ENCODE measurements at regions of chr20 and their contacts with region 1.

Region 1: DNA sequence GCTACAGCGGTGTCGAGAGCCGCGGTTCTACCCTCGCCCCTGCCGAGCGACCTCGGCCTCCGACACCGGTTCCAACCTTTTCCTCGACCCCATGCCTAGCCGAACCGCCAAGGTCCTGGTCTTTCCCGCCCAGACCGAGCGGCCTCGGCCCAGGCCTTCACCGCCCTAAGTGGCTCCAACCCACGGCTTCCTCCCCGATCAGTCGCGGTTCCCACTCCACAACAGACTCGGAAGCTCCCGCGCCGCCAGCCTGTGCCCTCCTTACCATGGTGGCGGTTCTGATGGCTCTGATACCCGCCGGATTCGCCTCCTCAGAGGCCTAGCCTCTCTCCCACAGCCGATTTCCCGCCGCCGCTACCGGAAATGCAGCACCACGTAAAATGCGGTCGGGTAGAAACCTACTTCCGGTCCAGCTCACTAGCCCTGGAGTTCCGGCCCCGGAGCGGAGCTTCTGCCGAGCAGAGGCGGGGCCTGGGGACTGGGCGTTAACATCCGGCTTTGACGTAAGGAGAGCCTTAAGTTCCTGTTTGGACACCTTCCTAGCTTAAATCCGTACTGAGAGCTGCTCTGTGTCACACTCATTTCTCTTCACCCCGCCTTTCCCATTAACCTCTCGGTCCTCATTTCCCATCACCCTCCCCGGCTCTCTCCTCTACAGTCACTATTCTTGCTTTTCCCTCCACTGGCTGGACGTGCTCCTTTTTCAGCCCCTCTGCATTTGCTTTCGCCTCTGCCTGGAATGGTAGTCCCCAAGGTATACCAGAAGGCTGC is at the start of gene SNRPB:
- DNase-seq: peak; percentile 95
- ATAC-seq: peak; percentile 95
- H3K4me3 Mint-ChIP-seq: peak within 1 kb of the TSS; percentile 96
- H3K27ac Mint-ChIP-seq: peak within 1 kb of the TSS; percentile 98
- H3K4me1 Mint-ChIP-seq: peaks cover 40% of the 10 kb centered on the region
- H3K27me3 Mint-ChIP-seq: no peaks in the 10 kb centered on the region
- total RNA-seq, gene SNRPB: 232 to 235 TPM

Region 2: GRCh38 chr20:2101865-2102584 is 368.6 kb before region 1 on chr20:
- POLR2A ChIA-PET with region 1: interaction called, 11 read pairs
- DNase-seq: peak; percentile 88
- ATAC-seq: peak; percentile 81
- H3K4me3 Mint-ChIP-seq: peak overlapping the region; percentile 93
- H3K27ac Mint-ChIP-seq: peak overlapping the region; percentile 100
- H3K4me1 Mint-ChIP-seq: peaks cover 33% of the 10 kb centered on the region
- H3K27me3 Mint-ChIP-seq: no peaks in the 10 kb centered on the region

Region 3: GRCh38 chr20:2455771-2456497 is 14.7 kb before region 1 on chr20:
- POLR2A ChIA-PET with region 1: interaction called, 32 read pairs
- DNase-seq: no peak
- ATAC-seq: no peak
- H3K4me3 Mint-ChIP-seq: no peak overlapping the region
- H3K27ac Mint-ChIP-seq: peak overlapping the region; percentile 13
- H3K4me1 Mint-ChIP-seq: no peaks in the 10 kb centered on the region
- H3K27me3 Mint-ChIP-seq: no peaks in the 10 kb centered on the region

Region 4: DNA sequence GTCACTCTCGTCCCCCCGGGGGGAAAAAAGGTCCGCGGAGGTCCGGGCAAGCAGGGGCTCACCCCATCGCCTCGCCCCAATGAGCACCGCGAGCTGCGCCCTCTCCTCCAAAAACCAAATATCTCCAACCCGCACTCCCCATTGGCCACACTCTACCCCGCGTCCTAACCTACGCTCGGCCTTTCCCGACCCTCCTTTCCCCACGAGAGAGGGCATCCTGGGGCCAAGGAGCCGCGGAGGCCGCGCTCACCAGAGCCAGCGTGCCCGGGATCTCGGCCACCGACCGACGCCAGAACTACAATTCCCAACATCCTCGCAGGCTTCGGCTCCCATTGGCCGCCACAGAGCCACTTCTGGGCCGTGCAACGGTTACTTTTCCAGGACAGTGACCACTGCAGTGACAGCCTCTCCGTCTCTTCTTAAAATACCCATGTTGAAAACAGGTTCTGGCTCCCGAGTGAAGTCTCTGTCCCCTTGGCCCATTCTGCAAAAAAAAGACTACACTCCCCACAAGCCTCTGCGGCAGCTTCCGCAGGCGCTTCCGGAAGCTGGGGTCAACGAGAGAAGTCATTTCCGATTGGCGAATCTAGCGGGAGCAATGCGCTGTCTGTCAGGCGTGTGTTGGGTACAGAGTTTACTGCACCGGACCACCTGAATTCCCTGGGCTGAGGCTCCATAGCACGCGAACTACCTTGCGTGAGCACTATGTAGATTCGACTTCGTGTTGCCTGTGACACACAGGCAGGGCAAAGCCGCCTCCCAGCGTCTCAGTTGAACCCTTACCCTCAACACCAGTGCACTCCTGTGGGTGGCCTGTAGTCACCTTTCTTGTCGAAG is 38.2 kb after region 1 on chr20 and contains the start of gene ZNF343:
- POLR2A ChIA-PET with region 1: interaction called, 27 read pairs
- DNase-seq: peak; percentile 77
- ATAC-seq: peak; percentile 92
- H3K4me3 Mint-ChIP-seq: peak within 1 kb of the TSS; percentile 99
- H3K27ac Mint-ChIP-seq: peak within 1 kb of the TSS; percentile 99
- H3K4me1 Mint-ChIP-seq: peaks cover 10% of the 10 kb centered on the region
- H3K27me3 Mint-ChIP-seq: peaks cover 27% of the 10 kb centered on the region
- total RNA-seq, gene ZNF343: 10.4 to 12.0 TPM

Region 5: DNA sequence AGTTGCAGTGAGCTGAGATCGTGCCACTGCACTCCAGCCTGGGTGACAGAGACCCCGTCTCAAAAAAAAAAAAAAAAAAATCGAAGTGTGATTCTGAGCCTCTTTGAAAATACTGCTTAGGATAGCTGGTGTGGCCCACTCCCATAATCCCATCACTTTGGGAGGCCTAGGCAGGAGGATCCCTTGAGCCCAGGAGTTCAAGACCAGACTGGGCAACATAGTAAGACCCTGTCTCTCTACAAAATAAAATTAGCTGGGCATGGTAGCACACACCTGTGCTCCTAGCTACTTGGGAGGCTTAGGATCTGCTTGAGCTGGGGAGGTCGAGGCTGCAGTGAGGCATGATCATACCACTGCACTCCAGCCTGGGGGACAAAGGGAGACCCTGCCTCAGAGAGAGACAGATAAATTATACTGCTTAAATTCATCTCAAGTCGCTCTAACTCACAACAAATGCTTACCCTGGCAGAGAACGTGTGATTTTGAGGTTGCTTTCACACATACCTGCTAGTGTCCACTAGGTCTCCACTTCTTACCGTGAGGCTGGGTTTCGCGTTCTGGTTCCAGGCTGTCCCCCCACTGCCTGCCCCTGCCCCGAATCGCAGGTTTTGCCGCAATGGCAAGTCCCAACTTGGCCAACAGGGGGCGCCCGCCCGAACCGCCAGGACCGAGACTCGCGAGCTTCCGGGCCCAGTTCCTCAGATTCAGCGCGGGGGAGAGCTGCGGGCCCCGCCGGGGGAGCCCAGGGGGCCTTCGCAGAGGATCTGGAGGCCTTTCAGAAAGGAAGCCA is 53.5 kb after region 1 on chr20:
- POLR2A ChIA-PET with region 1: interaction called, 30 read pairs
- DNase-seq: peak; percentile 96
- ATAC-seq: peak; percentile 77
- H3K4me3 Mint-ChIP-seq: peak overlapping the region; percentile 82
- H3K27ac Mint-ChIP-seq: peak overlapping the region; percentile 89
- H3K4me1 Mint-ChIP-seq: peaks cover 18% of the 10 kb centered on the region
- H3K27me3 Mint-ChIP-seq: peaks cover 10% of the 10 kb centered on the region

Region 6: GRCh38 chr20:2558581-2559278 is 88.1 kb after region 1 on chr20:
- POLR2A ChIA-PET with region 1: no interaction called
- DNase-seq: no peak
- ATAC-seq: no peak
- H3K4me3 Mint-ChIP-seq: no peak overlapping the region
- H3K27ac Mint-ChIP-seq: no peak overlapping the region
- H3K4me1 Mint-ChIP-seq: peaks cover 2% of the 10 kb centered on the region
- H3K27me3 Mint-ChIP-seq: peaks cover 70% of the 10 kb centered on the region

Region 7: DNA sequence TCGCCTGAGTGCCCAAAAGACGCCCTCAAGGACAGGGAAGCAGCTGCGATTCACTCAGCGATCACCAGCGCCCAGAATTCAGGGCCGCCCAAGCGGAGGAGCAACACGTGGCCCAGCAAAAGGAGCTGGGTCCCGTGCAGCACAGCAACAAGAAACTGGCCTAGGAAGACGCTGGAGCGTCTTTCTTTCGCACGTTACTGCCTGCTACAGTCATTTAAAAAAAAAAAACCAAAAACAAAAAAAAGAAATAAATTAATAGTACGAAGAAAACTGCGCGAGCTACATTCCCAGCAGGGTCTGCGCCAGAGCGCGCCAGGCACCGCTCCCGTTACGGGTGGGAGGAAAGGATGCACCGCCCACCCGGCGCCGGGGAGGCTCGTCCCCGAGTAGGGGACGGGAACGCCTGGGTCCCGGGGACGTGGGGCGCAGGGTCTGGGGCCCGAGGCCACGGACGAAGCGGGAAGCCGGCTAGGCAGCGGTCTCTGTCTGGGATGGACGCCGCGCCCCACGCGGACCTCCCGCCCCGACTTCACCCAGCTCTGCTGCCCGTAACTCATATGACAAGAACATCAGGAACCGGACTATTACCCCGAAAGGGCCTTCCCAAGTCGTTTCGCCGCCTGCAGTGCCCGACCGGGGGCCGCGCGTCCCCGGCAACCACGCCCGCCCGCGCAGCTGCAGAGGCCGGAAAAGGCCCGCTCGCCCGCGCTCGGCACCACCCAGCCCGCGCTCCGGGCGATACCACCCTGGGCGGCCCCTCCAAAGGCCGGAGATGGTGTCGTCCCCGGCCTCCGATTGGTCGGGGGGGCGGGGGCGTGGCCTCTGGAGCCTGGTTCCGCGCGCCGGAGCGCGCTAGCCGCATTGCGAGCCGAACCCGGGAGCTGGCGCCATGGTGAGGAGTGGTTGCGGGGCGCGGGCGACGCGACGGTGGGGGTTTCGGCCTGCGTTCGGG is 181.4 kb after region 1 on chr20 and contains the start of gene NOP56:
- POLR2A ChIA-PET with region 1: interaction called, 31 read pairs
- DNase-seq: peak; percentile 99
- ATAC-seq: peak; percentile 89
- H3K4me3 Mint-ChIP-seq: peak within 1 kb of the TSS; percentile 89
- H3K27ac Mint-ChIP-seq: peak within 1 kb of the TSS; percentile 87
- H3K4me1 Mint-ChIP-seq: peaks cover 33% of the 10 kb centered on the region
- H3K27me3 Mint-ChIP-seq: no peaks in the 10 kb centered on the region
- total RNA-seq, gene NOP56: 322 to 330 TPM

Region 8: DNA sequence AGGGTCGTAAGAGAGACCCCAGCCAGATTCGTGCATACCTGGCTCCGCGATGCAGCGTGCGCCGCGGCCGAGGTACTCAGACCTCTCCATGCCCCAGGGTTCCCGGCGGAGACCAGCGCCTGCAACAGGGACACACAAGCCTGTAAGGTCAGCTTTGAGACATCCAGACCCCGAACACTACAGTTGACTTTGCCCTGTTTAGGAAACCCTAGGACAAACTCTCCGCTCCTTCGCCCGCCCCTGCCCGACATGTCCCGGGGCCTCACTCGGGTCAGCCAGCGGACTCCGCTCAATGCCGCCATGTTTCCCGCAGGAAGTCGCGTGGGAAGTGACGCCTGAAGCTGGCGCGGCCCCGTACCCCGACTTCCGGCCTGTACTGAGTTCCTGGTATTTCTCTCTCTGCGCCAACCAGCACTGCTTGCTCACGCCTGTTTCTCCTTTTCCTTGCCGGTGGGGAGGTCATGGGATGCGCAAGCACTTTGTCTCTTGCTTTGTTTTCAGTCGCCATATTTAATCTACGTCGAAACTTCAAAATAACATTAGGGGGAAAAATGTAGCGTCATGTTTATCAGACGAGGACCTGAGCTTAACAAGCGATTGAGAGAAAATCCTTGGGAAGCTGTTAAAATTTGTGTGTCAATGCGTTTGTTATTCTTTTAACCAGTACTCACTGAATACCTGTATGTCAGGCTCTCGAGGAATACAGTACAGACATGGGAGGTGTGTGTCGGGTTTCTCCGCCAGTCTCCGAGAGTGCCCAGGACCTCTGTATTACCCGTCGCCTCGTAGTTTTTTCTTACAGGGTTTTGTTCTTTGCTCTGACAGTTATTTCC is 193.5 kb after region 1 on chr20 and contains the start of gene IDH3B:
- POLR2A ChIA-PET with region 1: interaction called, 15 read pairs
- DNase-seq: peak; percentile 91
- ATAC-seq: peak; percentile 99
- H3K4me3 Mint-ChIP-seq: peak within 1 kb of the TSS; percentile 93
- H3K27ac Mint-ChIP-seq: peak within 1 kb of the TSS; percentile 96
- H3K4me1 Mint-ChIP-seq: peaks cover 18% of the 10 kb centered on the region
- H3K27me3 Mint-ChIP-seq: peaks cover 7% of the 10 kb centered on the region
- total RNA-seq, gene IDH3B: 95.8 to 96.7 TPM

Measured in activated naive CD8-positive, alpha-beta T cell treated with anti-CD3 and anti-CD28 coated beads, Interleukin-2, amount 10 ng/mL, durations not matched to agents 7 days and 5 days (primary cell).